ENCODE measurements at regions of chr1 and their contacts with region 1.

Region 1: GRCh38 chr1:28505406-28506187 is at the start of gene RCC1:
- DNase-seq: peak; percentile 90 to 98 (median 96)
- H3K4me3 ChIP-seq: peak within 1 kb of the TSS; percentile 99
- H3K4me3 Mint-ChIP-seq: peak within 1 kb of the TSS; percentile 93 to 99 (median 97)
- H3K27ac ChIP-seq: peak within 1 kb of the TSS; percentile 90
- H3K27ac Mint-ChIP-seq: peak within 1 kb of the TSS; percentile 89 to 99 (median 96)
- H3K4me1 ChIP-seq: peaks cover 41% of the 10 kb centered on the region
- H3K4me1 Mint-ChIP-seq: peaks cover 40 to 49% (median 49%) of the 10 kb centered on the region in 3 donors
- H3K27me3 ChIP-seq: no peaks in the 10 kb centered on the region
- H3K27me3 Mint-ChIP-seq: peaks cover 0 to 6% of the 10 kb centered on the region in 2 donors
- total RNA-seq, gene RCC1: 115 to 116 TPM

Region 2: GRCh38 chr1:28456078-28456477 is 49.5 kb before region 1 on chr1:
- CTCF ChIA-PET with region 1: no interaction called
- POLR2A ChIA-PET with region 1: no interaction called
- DNase-seq: no peak
- H3K4me3 ChIP-seq: no peak overlapping the region
- H3K4me3 Mint-ChIP-seq: no peak overlapping the region
- H3K27ac ChIP-seq: no peak overlapping the region
- H3K27ac Mint-ChIP-seq: peak overlapping the region in 3 of 8 donors; percentile 1 to 44 (median 23)
- H3K4me1 ChIP-seq: peaks cover 8% of the 10 kb centered on the region
- H3K4me1 Mint-ChIP-seq: peaks cover 0 to 7% (median 2%) of the 10 kb centered on the region in 3 donors
- H3K27me3 ChIP-seq: no peaks in the 10 kb centered on the region
- H3K27me3 Mint-ChIP-seq: no peaks in the 10 kb centered on the region

Region 3: GRCh38 chr1:28518000-28518744 is 12.6 kb after region 1 on chr1:
- CTCF ChIA-PET with region 1: interaction called, 9 read pairs
- POLR2A ChIA-PET with region 1: interaction called, 11 read pairs
- DNase-seq: peak; percentile 79 to 90 (median 83)
- H3K4me3 ChIP-seq: peak overlapping the region; percentile 78
- H3K4me3 Mint-ChIP-seq: peak overlapping the region; percentile 84 to 96 (median 89)
- H3K27ac ChIP-seq: peak overlapping the region; percentile 75
- H3K27ac Mint-ChIP-seq: peak overlapping the region; percentile 76 to 94 (median 87)
- H3K4me1 ChIP-seq: peaks cover 18% of the 10 kb centered on the region
- H3K4me1 Mint-ChIP-seq: peaks cover 26 to 28% (median 27%) of the 10 kb centered on the region in 3 donors
- H3K27me3 ChIP-seq: no peaks in the 10 kb centered on the region
- H3K27me3 Mint-ChIP-seq: peaks cover 0 to 3% of the 10 kb centered on the region in 2 donors

Region 4: DNA sequence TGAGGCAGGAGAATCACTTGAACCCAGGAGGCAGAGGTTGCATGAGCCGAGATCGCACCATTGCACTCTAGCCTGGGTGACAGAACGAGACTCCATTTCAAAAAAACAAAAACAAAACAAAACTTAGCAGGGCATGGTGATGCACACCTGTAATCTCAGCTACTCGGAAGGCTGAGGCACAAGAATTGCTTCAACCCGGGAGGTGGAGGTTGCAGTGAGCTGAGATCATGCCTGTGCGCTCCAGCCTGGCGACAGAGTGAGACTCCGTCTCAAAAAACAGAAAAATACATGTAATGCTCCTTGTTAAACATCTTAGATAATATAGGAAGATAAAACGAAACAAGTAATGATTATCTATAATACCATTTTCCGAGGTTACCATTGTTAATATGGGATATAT is 22.8 kb after region 1 on chr1:
- CTCF ChIA-PET with region 1: no interaction called
- POLR2A ChIA-PET with region 1: no interaction called
- DNase-seq: no peak
- H3K4me3 ChIP-seq: no peak overlapping the region
- H3K4me3 Mint-ChIP-seq: no peak overlapping the region
- H3K27ac ChIP-seq: no peak overlapping the region
- H3K27ac Mint-ChIP-seq: no peak overlapping the region
- H3K4me1 ChIP-seq: no peaks in the 10 kb centered on the region
- H3K4me1 Mint-ChIP-seq: no peaks in the 10 kb centered on the region
- H3K27me3 ChIP-seq: no peaks in the 10 kb centered on the region
- H3K27me3 Mint-ChIP-seq: no peaks in the 10 kb centered on the region